Dorsolateral prefrontal cortex (tissue), 120 donors: ENCODE measurements at regions of chr9 and their contacts with region 1.

Region 1: GRCh38 chr9:127112056-127112455 is 10.4 kb downstream of the ANGPTL2 start:
- DNase-seq: peak in 2 of 10 donors; percentile 40 to 58
- H3K4me3 ChIP-seq: no peak overlapping the region
- H3K27ac ChIP-seq: peak overlapping the region in 25 of 59 donors; percentile 1 to 64 (median 21)
- H3K27me3 ChIP-seq: no peaks in the 10 kb centered on the region
- CTCF ChIP-seq: no peak

Region 2: DNA sequence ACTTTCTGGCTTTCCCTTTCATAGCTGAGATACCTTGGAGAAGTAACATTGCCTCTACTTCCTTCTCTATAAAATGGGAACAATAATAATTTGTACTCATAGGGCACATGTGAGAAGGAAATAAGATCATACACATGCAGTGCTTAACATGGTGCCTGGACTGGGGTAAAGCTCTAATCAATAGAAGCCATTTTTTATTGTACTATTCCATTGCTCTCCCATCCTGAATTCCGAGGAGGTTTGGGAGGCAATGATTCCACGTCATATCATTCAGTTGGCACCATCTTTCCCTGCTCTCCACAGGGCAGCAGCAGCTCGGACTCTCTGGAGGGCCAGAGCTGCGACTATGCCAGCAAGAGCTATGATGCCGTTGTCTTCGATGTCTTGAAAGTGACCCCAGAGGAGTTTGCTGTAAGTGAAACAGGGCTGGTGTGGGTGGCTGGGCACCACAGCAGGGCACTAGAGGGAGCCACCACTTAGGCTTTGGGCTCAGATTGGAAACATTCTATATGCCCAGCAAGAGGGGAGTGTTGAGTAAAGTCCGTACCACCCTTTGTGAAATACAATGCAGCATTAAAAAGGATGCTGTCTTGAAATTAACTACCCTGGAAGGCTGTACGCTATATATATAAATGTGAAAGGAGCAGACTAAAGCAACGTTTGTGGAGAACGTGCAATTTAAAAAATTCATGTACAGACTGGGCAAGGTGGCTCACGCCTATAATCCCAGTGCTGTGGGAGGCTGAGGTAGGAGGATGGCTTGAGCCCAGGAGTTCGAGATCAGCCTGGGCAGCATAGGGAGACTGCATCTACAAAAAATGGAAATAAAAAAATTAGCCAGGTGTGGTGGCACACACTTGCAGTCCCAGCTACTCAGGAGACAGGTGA is 146.3 kb before region 1 on chr9:
- intact Hi-C with region 1: loop called in 1 of 2 experiments (anchors 10 kb)
- DNase-seq: peak; percentile 34 to 72 (median 62)
- H3K4me3 ChIP-seq: no peak overlapping the region
- H3K27ac ChIP-seq: peak overlapping the region in 9 of 59 donors; percentile 13 to 61 (median 36)
- H3K27me3 ChIP-seq: no peaks in the 10 kb centered on the region
- CTCF ChIP-seq: peak; percentile 31 to 89 (median 78)

Region 3: GRCh38 chr9:127021664-127022363 is 90.2 kb before region 1 on chr9:
- intact Hi-C with region 1: loop called (anchors 5 to 10 kb)
- DNase-seq: peak; percentile 68 to 92 (median 86)
- H3K4me3 ChIP-seq: no peak overlapping the region
- H3K27ac ChIP-seq: peak overlapping the region in 45 of 59 donors; percentile 6 to 88 (median 57)
- H3K27me3 ChIP-seq: no peaks in the 10 kb centered on the region
- CTCF ChIP-seq: peak in 13 of 56 donors; percentile 4 to 53 (median 21)

Region 4: GRCh38 chr9:127047971-127048370 is 64.1 kb before region 1 on chr9:
- intact Hi-C with region 1: no loop called
- DNase-seq: no peak
- H3K4me3 ChIP-seq: no peak overlapping the region
- H3K27ac ChIP-seq: peak overlapping the region in 1 of 59 donors; percentile 38
- H3K27me3 ChIP-seq: no peaks in the 10 kb centered on the region
- CTCF ChIP-seq: no peak

Region 5: DNA sequence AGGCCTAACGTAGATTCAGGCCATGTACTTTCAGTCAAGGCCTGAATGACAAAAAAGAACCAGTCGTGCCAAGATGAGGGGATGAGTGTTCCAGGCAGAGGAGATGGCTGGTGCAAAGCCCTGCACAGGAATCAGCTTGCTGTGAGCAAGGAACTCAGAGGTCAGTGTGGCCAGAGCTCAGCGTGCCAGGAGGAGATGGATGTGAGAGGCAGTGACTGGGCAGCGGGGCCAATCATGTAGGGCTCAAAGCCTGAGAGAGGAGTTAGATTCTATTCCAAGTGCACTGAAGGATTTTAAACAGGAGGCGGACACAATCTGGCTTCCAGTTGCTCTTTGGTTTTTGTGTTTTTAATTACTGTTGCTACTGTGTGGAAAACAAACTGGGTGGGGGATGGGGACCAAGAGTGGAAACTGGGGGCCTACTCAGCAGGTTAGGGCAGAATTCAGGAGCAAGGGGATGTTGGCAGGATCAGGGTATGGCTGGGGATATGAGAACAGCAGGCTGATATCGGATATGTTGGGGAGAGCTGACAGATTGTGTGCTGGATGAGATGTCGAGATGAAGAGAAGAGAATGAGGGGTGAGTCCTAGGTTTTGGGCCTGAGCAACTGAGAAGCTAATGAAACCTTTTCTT is 53.9 kb before region 1 on chr9:
- intact Hi-C with region 1: loop called in 1 of 2 experiments (anchors 5 kb)
- DNase-seq: peak; percentile 24 to 77 (median 64)
- H3K4me3 ChIP-seq: no peak overlapping the region
- H3K27ac ChIP-seq: peak overlapping the region; percentile 4 to 94 (median 84)
- H3K27me3 ChIP-seq: no peaks in the 10 kb centered on the region
- CTCF ChIP-seq: no peak